ENCODE measurements at regions of chr2 and their contacts with region 1.

Region 1: DNA sequence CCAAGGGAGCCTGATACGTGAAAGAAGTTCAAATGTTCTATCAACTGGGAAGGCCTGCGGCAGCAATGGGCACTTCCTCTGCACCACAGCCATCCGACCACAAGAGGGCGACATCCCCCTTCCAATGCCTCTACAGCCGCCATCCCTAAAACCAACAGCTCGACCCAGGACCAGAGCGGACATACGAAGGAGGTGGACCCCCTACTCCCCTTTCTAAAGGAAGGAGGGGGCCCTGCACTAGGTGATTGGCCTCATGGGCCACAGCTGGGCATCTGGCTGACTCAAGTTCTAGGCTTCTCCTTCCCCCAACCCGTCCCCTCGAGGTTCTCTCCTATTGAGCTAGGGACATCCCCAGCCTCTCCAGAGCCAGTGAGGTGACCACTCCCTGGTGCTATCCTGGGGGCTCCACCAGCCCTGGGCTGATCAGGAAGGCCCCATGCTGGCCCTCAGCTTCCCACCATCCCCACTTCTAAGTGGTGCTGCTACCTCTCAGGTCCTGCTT is 217.2 kb downstream of the TNS1 start:
- DNase-seq: peak; percentile 62
- H3K4me3 Mint-ChIP-seq: no peak overlapping the region
- H3K27ac Mint-ChIP-seq: no peak overlapping the region
- H3K4me1 Mint-ChIP-seq: peaks cover 5% of the 10 kb centered on the region
- H3K27me3 Mint-ChIP-seq: peaks cover 16% of the 10 kb centered on the region
- CTCF ChIP-seq: peak; percentile 95

Region 2: DNA sequence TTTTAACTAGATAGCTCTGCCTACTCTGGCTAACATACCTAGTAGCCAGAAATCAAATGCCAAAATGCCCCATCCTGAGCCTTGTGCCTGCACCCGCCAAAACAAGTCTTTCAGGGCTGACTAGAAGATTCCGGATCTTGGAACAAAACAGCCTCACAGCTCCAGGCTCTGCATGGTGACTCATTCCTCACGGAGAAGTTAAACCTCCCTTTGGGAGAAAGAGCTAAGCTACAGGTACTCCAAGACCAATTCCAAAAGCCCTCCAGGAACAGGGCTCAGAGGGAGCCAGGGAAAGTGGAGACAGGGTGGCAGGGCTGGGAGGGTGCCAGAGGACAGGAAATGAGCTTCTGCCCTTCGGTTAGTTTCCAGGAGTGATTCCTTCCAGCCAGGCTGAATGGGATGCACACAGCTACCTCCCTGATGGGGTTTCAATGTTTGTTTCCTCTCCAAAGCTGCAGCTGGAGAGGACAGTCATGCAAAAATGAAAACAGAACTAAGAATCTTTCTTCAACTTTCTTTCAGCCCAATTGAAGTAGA is 78.4 kb before region 1 on chr2:
- CTCF ChIA-PET with region 1: no interaction called
- POLR2A ChIA-PET with region 1: no interaction called
- intact Hi-C with region 1: no loop called
- DNase-seq: peak; percentile 87
- H3K4me3 Mint-ChIP-seq: no peak overlapping the region
- H3K27ac Mint-ChIP-seq: peak overlapping the region; percentile 57
- H3K4me1 Mint-ChIP-seq: peaks cover 8% of the 10 kb centered on the region
- H3K27me3 Mint-ChIP-seq: no peaks in the 10 kb centered on the region
- CTCF ChIP-seq: no peak

Region 3: GRCh38 chr2:217812170-217812569 is 26.6 kb after region 1 on chr2:
- CTCF ChIA-PET with region 1: interaction called, 22 read pairs
- POLR2A ChIA-PET with region 1: interaction called, 3 read pairs
- intact Hi-C with region 1: no loop called
- DNase-seq: no peak
- H3K4me3 Mint-ChIP-seq: no peak overlapping the region
- H3K27ac Mint-ChIP-seq: no peak overlapping the region
- H3K4me1 Mint-ChIP-seq: no peaks in the 10 kb centered on the region
- H3K27me3 Mint-ChIP-seq: no peaks in the 10 kb centered on the region
- CTCF ChIP-seq: no peak

Region 4: DNA sequence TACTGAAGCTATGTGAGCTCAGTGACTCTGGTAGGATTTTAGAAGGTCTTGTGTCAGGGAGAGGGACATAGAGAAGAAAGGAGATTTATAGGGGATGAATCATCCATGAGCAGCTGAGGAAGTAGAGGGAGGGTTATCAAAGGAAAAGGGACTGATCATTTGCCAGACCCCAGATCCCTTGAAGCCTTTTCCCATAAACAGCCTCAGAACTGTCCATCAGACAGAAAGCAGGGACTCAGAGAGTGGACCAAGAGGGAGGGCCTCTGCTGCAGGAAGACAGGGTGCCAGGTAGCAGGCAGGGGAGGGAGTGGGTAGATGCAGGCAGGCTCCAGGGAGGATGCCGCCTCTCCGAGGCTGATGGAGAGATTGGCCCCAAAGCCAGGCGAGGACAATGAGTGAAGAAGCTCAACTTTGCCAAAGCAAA is 83.3 kb after region 1 on chr2:
- CTCF ChIA-PET with region 1: interaction called, 20 read pairs
- POLR2A ChIA-PET with region 1: no interaction called
- intact Hi-C with region 1: no loop called
- DNase-seq: no peak
- H3K4me3 Mint-ChIP-seq: no peak overlapping the region
- H3K27ac Mint-ChIP-seq: no peak overlapping the region
- H3K4me1 Mint-ChIP-seq: no peaks in the 10 kb centered on the region
- H3K27me3 Mint-ChIP-seq: no peaks in the 10 kb centered on the region
- CTCF ChIP-seq: no peak

Region 5: DNA sequence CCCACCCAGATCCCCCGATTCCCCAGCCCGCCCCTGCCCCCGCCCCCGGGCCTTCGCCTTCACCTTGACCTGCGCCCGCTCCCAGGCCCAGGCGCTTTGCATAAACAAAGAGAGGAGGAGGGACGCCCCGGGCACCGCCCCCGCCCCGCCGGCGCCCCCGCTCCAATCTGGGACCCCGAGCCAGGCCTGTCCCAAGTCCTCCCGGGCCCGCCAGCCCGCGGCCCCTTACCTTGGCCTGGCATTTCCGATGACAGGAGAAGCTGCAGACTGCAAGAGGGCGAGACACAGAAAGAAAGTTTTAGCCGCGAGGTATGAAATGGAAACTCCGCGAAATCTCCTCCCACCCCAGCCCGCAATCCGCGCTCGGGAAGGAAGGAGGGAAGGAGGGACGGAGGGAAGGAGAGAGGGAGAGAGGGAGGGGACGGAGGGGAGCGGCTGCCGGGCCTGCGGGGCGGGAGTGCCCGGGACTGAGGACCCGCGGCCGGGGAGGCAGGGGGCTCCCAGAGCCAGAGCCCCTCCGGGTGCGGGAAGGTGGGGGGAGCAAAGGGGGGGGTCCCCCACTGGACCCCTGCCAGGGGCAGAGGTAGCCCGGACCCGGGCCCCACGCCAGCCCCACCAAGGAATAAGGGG is 193.1 kb after region 1 on chr2:
- CTCF ChIA-PET with region 1: interaction called, 350 read pairs
- POLR2A ChIA-PET with region 1: no interaction called
- intact Hi-C with region 1: no loop called
- DNase-seq: no peak
- H3K4me3 Mint-ChIP-seq: peak overlapping the region; percentile 49
- H3K27ac Mint-ChIP-seq: no peak overlapping the region
- H3K4me1 Mint-ChIP-seq: no peaks in the 10 kb centered on the region
- H3K27me3 Mint-ChIP-seq: no peaks in the 10 kb centered on the region
- CTCF ChIP-seq: no peak

Region 6: DNA sequence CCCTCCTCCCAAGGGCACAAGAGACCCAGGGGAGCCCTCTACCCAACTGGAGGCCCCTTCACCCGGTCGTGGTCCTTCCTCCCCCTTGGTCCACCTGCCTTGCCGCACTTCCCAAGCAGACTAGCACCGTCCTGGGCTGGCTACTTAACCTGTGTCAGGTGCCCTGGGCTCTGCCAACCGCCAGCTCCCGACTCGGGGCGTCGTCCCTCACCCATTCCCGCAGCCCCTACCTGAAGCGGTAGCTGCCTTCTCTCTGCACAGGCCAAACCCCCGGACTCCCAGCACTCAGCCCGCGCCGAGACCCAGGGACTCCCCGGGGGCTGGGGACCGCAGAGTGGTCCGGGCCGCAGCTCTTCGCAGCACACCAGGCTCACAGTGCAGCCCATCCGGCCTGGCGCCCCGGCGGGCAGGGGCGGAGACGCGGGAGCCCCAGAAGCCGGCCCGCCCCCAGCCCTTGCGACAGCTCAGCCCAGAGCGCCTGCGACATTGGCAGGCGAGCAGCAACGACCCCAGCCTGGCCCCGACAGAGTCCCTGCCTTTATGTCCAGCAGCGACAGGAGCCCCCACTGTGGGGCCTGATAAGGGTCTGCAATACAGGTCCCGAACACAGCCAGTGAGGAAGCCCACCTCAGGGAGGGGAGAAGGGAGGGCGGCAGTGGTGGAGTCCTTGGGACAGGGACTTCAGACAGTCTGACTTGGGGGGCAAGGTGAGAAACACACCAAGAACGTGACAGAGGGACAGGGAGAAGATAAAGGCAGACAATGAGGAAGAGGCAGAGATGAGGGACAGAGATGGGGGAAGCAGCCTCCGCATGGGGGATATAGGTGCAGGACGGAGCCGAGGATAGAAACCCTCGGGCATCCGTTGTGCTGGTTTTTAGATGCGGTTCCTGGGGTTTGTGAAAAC is 248.2 kb after region 1 on chr2:
- CTCF ChIA-PET with region 1: interaction called, 154 read pairs
- POLR2A ChIA-PET with region 1: no interaction called
- intact Hi-C with region 1: loop called (anchors 1 kb)
- DNase-seq: no peak
- H3K4me3 Mint-ChIP-seq: no peak overlapping the region
- H3K27ac Mint-ChIP-seq: no peak overlapping the region
- H3K4me1 Mint-ChIP-seq: no peaks in the 10 kb centered on the region
- H3K27me3 Mint-ChIP-seq: peaks cover 28% of the 10 kb centered on the region
- CTCF ChIP-seq: no peak

Region 7: GRCh38 chr2:218074031-218074430 is 288.4 kb after region 1 on chr2:
- CTCF ChIA-PET with region 1: interaction called, 12 read pairs
- POLR2A ChIA-PET with region 1: no interaction called
- intact Hi-C with region 1: loop called (anchors 1 kb)
- DNase-seq: peak; percentile 32
- H3K4me3 Mint-ChIP-seq: no peak overlapping the region
- H3K27ac Mint-ChIP-seq: no peak overlapping the region
- H3K4me1 Mint-ChIP-seq: no peaks in the 10 kb centered on the region
- H3K27me3 Mint-ChIP-seq: peaks cover 28% of the 10 kb centered on the region
- CTCF ChIP-seq: peak; percentile 7